OCI-LY7 (cell line): ENCODE measurements at regions of chr17 and their contacts with region 1.

Region 1: DNA sequence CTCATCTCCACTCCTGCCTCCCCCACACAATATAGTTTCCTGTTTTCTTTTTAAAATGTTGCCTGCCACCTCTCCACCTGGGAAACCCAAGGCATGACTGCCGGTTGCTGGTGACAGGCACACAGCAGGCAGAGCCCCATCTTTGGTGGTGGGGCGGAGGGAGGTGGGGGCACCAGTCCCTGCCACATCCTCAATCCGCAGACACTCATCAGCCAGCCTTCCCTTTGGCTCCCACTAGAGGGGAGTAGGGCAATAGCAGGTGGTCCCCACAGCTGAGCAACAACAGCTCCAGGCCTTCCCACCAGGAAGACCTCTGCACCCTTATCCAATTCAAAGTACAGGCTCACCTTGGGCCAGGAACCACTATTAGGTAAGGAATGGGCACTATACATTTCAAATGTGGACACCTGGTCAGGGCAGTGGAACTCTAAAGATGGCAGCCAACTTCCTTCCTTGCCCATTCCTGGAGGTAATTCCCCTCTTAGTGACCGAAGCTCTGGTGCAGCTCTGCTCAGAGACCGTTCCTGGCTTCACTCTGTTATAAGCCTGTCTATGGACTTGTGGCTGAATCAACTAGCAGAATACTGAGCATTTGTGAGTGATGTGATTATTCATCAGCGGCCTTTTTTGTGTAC is 13.9 kb downstream of the RECQL5 start:
- DNase-seq: peak; percentile 75
- H3K4me3 ChIP-seq: no peak overlapping the region
- H3K27ac ChIP-seq: peak overlapping the region; percentile 14
- H3K4me1 ChIP-seq: peaks cover 32% of the 10 kb centered on the region
- CTCF ChIP-seq: peak; percentile 97

Region 2: DNA sequence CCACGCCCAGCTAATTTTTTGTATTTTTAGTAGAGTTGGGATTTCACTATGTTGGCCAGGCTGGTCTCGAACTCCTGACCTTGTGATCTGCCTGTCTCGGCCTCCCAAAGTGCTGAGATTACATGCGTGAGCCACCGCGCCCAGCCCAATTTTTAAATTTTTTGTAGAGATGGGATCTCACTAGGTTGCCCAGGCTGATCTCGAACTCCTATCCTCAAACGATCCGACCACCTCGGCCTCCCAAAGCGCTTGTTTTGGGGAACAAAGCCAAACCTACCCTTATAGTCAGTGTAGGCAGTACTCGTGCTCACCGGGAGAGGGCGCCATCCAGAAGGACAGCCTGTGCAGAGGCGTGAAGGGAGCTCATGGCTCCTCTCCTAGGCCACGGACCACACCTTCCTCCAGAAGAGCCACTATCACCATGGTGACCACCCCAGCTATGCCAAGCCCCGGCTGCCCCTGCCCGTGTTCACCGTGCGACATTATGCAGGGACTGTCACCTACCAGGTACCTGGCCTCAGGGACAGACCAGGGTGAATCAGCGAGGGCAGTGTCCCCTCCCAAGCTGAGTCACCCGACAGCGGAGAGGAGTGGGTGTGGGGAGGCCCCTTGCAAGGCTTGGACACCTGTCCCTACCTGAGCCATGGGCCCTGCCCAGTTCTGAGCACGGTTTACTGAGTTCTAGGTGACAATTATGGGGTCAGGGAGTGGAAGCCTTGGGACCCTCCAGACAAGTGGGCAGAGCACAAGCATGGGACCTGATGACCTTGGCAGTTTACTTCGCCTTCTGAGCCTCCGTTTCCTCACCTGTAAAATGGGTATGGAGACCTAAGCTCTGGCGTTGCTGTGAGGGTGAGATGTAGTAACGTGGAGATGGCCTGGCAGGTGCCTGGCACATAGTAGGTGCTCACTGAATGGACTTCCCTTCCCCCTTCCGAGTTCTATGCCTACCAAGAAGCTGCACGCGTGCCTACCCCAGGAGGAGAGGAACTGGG is 51.7 kb before region 1 on chr17:
- CTCF ChIA-PET with region 1: interaction called, 3 read pairs
- POLR2A ChIA-PET with region 1: interaction called, 3 read pairs
- intact Hi-C with region 1: loop called (anchors 1 kb)
- DNase-seq: peak; percentile 78
- H3K4me3 ChIP-seq: no peak overlapping the region
- H3K27ac ChIP-seq: no peak overlapping the region
- H3K4me1 ChIP-seq: no peaks in the 10 kb centered on the region
- CTCF ChIP-seq: peak; percentile 97

Region 3: GRCh38 chr17:75632863-75633485 is 20.1 kb before region 1 on chr17 and contains the start of gene SMIM5:
- CTCF ChIA-PET with region 1: interaction called, 19 read pairs
- POLR2A ChIA-PET with region 1: interaction called, 3 read pairs
- intact Hi-C with region 1: loop called (anchors 1 kb)
- DNase-seq: peak; percentile 87
- H3K4me3 ChIP-seq: no peak within 1 kb of the TSS
- H3K27ac ChIP-seq: peak within 1 kb of the TSS; percentile 23
- H3K4me1 ChIP-seq: peaks cover 22% of the 10 kb centered on the region
- CTCF ChIP-seq: peak; percentile 99
- total RNA-seq, gene SMIM5: 0.06 TPM in 1 of 2 replicates, not detected in the other

Region 4: GRCh38 chr17:75667021-75667790 is 14.2 kb after region 1 on chr17 and contains the starts of genes RECQL5 and SAP30BP:
- CTCF ChIA-PET with region 1: interaction called, 3 read pairs
- POLR2A ChIA-PET with region 1: interaction called, 11 read pairs
- intact Hi-C with region 1: no loop called
- DNase-seq: peak; percentile 100
- H3K4me3 ChIP-seq: peak within 1 kb of the TSS; percentile 84
- H3K27ac ChIP-seq: peak within 1 kb of the TSS; percentile 94
- H3K4me1 ChIP-seq: peaks cover 54% of the 10 kb centered on the region
- CTCF ChIP-seq: no peak
- total RNA-seq, gene RECQL5: 90.0 and 91.9 TPM in 2 replicates
- total RNA-seq, gene SAP30BP: 122 and 127 TPM in 2 replicates

Region 5: GRCh38 chr17:75689441-75689873 is 36.4 kb after region 1 on chr17:
- CTCF ChIA-PET with region 1: no interaction called
- POLR2A ChIA-PET with region 1: interaction called, 11 read pairs
- intact Hi-C with region 1: no loop called
- DNase-seq: peak; percentile 98
- H3K4me3 ChIP-seq: peak overlapping the region; percentile 53
- H3K27ac ChIP-seq: peak overlapping the region; percentile 97
- H3K4me1 ChIP-seq: peaks cover 69% of the 10 kb centered on the region
- CTCF ChIP-seq: no peak